Gastrocnemius medialis (tissue), 4 donors: ENCODE measurements at regions of chr10 and their contacts with region 1.

Region 1: DNA sequence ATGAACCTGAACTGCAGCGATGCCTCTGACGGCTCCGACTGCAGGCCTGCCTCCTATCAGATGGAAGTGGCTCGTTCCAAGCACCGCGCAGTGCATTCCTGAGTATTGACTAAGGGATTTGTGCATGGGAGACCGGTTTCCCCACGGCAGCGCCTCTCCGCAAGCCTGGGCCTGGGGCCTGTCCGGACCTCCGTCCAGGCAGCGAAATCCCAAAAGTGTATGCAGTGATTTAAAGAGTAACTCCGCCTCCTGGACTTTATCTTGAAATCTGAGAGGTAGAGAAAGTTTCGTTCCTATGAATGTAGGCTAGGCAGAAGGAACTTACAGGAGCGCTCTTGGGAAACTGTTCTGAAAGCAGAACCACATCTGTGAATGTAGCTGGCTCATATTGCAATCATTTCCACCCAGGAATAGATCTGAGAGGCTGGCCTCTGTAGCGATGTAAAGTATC is 106.2 kb upstream of the CELF2 start:
- DNase-seq: peak; percentile 56 to 72
- ATAC-seq: peak; percentile 94 to 95
- H3K4me3 ChIP-seq: peak overlapping the region; percentile 42 to 55 (median 44)
- H3K27ac ChIP-seq: peak overlapping the region; percentile 73 to 79 (median 77)
- H3K4me1 ChIP-seq: peaks cover 17 to 36% of the 10 kb centered on the region in 2 donors
- H3K27me3 ChIP-seq: no peaks in the 10 kb centered on the region
- CTCF ChIP-seq: no peak
- POLR2A ChIP-seq: no peak

Region 2: DNA sequence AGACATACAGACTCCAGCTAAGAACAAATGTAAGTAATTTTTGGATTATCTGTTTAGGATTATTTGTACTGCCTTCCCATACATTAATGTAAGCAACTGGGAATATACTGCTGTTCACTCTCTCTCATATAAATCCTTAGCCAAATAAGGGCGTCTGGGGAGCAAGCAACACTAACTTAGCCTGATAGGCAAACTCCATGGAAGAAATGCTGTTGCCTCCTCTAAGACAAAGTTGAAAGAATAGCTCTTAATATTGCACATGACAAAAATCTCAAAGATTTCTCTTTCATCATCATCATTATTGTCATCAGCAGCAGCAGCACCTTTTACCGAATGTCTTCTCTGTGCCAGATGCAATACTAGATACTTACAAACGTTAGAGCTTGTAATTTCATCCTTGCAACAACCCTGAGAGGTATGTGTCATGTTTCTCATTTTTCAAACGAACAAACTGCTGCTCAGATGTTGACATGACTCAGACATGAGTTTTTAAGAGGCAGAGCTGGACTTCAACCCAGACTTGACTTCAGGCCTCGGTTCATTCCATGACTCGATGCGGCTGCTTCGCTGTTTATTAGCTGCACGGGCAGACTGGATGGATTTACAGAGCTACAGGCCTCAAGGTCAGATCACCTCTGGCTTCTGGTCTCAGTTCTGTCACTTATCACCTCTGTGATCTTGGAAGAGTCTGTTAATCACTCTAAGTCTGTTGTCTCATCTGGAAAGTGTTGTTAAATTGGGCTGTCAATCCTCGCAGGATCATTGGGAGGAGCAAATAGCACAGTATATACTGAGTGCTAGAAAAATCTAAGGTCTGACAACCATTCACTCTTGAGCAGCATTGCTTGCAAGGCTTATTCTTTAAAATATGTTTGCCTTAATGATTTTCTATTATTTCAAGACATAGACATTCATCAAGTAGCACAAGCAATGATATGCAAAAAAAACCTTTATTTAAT is 20.1 kb before region 1 on chr10:
- in situ Hi-C with region 1: no loop called
- intact Hi-C with region 1: loop called (anchors 1 kb)
- DNase-seq: peak; percentile 57 to 59
- ATAC-seq: peak; percentile 98 to 99
- H3K4me3 ChIP-seq: no peak overlapping the region
- H3K27ac ChIP-seq: peak overlapping the region; percentile 40 to 71 (median 70)
- H3K4me1 ChIP-seq: peaks cover 12 to 15% of the 10 kb centered on the region in 2 donors
- H3K27me3 ChIP-seq: no peaks in the 10 kb centered on the region
- CTCF ChIP-seq: no peak
- POLR2A ChIP-seq: peak in 1 of 2 donors; percentile 24

Region 3: GRCh38 chr10:10977978-10978377 is 66.5 kb after region 1 on chr10:
- in situ Hi-C with region 1: no loop called
- intact Hi-C with region 1: loop called (anchors 5 kb)
- DNase-seq: no peak
- ATAC-seq: peak; percentile 48 to 53
- H3K4me3 ChIP-seq: no peak overlapping the region
- H3K27ac ChIP-seq: peak overlapping the region in 1 of 4 donors; percentile 45
- H3K4me1 ChIP-seq: no peaks in the 10 kb centered on the region
- H3K27me3 ChIP-seq: peaks cover 0 to 3% (median 0%) of the 10 kb centered on the region in 3 donors
- CTCF ChIP-seq: no peak
- POLR2A ChIP-seq: no peak

Region 4: DNA sequence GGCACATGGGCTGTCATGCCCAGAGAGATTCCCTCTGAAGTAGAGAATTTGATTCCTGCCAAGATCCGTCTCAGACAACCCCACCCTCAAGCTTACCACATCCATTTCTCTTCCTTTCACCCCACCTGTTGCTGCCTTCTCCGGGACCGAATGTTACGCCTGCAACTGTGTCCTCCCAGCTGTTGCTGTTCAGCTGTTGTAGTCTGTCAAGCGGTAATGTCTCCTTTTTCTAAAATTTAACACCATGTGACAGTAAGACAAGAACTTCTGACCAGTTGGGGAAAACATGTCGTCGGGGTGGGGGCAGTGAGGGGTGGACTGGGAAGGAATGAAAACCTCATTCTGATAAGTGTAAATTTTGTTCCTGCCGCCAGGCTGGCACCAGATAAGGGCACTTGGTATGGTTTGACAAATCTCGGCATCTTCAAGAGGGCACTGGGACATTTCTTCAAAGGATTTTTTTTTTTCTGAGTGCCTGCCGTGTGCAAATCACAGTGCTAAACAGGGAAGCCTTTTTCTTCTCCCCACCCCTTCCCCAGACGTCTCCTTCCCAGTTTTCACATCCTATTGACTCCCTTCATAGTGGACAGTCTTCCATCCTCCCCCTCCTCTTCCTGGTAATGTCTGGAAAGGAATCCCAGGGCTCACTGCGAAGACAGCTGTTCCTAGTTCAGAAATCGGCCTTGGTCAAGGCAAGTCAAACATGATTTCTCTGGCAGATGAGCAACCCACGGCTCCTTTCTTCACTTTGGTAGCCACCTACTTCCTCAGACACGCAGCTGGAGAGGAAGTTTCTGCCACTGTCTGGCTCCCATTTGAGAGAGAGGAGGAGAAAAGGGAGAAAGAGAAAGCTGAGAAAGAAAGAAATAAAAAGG is 101.2 kb after region 1 on chr10:
- in situ Hi-C with region 1: no loop called
- intact Hi-C with region 1: loop called (anchors 2 kb)
- DNase-seq: peak; percentile 74 to 84
- ATAC-seq: peak; percentile 88 to 91
- H3K4me3 ChIP-seq: peak overlapping the region; percentile 23 to 37 (median 30)
- H3K27ac ChIP-seq: peak overlapping the region; percentile 78 to 86 (median 84)
- H3K4me1 ChIP-seq: peaks cover 0 to 47% of the 10 kb centered on the region in 2 donors
- H3K27me3 ChIP-seq: peaks cover 0 to 26% (median 0%) of the 10 kb centered on the region in 3 donors
- CTCF ChIP-seq: peak in 1 of 5 experiments; percentile 27
- POLR2A ChIP-seq: peak; percentile 10 to 29

Region 5: DNA sequence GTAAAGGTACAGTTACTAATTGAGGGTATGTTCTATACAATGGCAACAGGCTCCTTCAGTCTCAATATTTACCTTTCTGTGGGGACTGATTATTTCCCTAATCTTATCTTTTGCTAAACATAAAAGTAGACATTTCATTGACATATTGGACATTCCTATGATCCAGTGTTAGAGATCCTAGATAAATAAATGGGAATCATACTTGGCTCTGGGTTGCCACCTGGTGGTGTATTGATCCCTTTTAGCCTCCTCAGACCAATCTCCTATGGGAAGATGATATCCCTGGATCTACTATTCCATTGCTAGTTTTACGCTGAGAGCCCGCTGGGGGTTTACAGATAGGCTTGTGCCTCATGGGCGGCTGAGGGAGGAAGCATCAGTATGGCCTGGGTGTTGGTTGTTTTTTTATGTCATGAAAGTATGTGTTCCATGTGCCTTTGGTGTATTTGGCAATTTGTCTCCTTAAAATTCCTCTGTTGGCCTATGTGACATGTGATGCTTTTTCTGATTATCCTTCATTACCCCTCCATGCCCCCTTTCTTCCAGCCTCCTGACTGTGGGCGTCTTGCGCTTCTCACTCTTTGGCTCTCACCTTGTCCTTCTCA is 125.0 kb after region 1 on chr10:
- in situ Hi-C with region 1: no loop called
- intact Hi-C with region 1: loop called (anchors 5 kb)
- DNase-seq: no peak
- ATAC-seq: peak; percentile 46 to 60
- H3K4me3 ChIP-seq: no peak overlapping the region
- H3K27ac ChIP-seq: no peak overlapping the region
- H3K4me1 ChIP-seq: peaks cover 14 to 18% of the 10 kb centered on the region in 2 donors
- H3K27me3 ChIP-seq: no peaks in the 10 kb centered on the region
- CTCF ChIP-seq: peak; percentile 16 to 63 (median 53)
- POLR2A ChIP-seq: no peak